ENCODE measurements at regions of chr6 and their contacts with region 1.

Region 1: DNA sequence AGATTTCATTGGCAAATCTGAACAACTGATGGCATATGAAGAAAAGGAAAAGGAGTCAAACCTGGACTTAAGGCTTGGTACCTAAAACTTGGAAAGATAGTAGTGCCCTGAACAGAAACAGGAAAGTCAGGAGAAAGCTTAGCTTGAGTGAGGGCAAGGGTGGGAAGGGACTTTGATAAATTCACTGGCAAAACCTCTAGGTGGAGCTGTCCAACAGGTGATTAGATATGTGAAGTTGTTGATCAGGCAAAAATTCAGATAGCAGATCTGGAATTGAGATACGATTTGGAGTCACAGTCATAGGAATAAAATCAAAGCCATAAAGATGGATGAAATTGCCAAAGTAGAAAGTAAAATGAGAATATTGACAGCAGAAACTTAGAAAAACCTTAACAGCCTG is 16.1 kb upstream of the ZNF292 start:
- DNase-seq: no peak
- H3K4me3 ChIP-seq: no peak overlapping the region
- H3K27ac ChIP-seq: no peak overlapping the region
- H3K4me1 ChIP-seq: no peaks in the 10 kb centered on the region
- H3K27me3 ChIP-seq: no peaks in the 10 kb centered on the region
- CTCF ChIP-seq: peak; percentile 49 to 69 (median 65)
- POLR2A ChIP-seq: no peak

Region 2: GRCh38 chr6:87237804-87238203 is 98.6 kb after region 1 on chr6:
- intact Hi-C with region 1: loop called (anchors 10 kb)
- DNase-seq: no peak
- H3K4me3 ChIP-seq: no peak overlapping the region
- H3K27ac ChIP-seq: no peak overlapping the region
- H3K4me1 ChIP-seq: no peaks in the 10 kb centered on the region
- H3K27me3 ChIP-seq: no peaks in the 10 kb centered on the region
- CTCF ChIP-seq: peak; percentile 17 to 51 (median 38)
- POLR2A ChIP-seq: no peak

Region 3: DNA sequence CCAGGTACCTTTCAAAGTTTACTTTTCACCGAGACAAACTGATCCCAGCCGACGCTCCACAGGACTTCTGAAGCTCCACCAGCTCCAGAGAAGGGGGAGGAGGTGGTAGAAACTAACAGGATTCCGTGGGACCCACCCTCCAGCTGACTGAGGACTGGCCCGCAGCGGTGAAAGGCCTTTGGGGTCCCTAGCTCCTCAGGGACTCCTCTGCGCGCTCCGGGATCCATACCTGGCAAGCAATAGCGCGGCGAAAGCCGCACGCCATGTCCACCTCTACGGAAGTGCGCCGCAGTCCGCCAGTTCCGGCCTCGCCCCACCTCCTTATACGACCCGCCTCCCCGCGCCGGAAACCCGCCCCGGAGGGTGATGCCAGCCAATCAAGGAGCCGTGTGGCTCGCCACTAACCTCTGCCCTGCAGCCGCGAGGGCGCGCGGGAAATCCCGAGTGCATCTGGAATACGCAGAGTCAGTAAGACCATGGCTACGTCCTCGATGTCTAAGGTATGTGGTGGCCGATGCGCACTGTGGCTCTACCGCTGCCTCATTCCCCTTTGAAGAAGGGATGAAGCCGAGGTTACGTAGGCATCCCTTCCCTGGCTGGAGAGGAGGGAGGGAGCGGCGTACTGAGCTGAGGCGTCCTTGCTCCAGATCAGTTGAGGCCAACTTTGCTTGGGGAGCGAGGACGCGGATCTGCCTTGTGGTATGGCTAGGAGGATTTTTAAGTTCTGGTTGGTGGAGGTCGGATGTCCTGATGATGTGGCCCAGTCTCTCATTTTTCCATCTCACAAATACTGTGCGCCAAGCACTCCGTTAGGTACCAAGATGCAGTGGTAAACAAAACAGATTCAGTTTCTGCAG is 450.7 kb after region 1 on chr6 and contains the starts of genes ORC3 and RARS2:
- intact Hi-C with region 1: no loop called
- DNase-seq: peak; percentile 94 to 96
- H3K4me3 ChIP-seq: peak within 1 kb of the TSS; percentile 58 to 87
- H3K27ac ChIP-seq: peak within 1 kb of the TSS; percentile 71 to 85
- H3K4me1 ChIP-seq: peaks cover 8 to 14% of the 10 kb centered on the region in 2 donors
- H3K27me3 ChIP-seq: no peaks in the 10 kb centered on the region
- CTCF ChIP-seq: no peak
- POLR2A ChIP-seq: peak; percentile 28 to 86
- total RNA-seq, gene ORC3: 6.2 to 43.9 (median 24.8) TPM
- total RNA-seq, gene RARS2: 15.6 to 61.3 (median 44.1) TPM

Measured in uterus (tissue), 4 donors.